Naive thymus-derived CD4-positive, alpha-beta T cell (primary cell): ENCODE measurements at regions of chrX and their contacts with region 1.

Region 1: GRCh38 chrX:19799319-19800182 is 87.8 kb downstream of the SH3KBP1 start:
- DNase-seq: peak in 7 of 9 donors; percentile 55 to 79 (median 72)
- ATAC-seq: peak; percentile 82
- H3K4me3 ChIP-seq: peak overlapping the region; percentile 86
- H3K4me3 Mint-ChIP-seq: peak overlapping the region; percentile 89 to 97 (median 94)
- H3K27ac ChIP-seq: peak overlapping the region; percentile 74
- H3K27ac Mint-ChIP-seq: peak overlapping the region; percentile 92 to 97 (median 95)
- H3K4me1 ChIP-seq: peaks cover 53 to 58% of the 10 kb centered on the region in 2 donors
- H3K4me1 Mint-ChIP-seq: peaks cover 15 to 74% (median 64%) of the 10 kb centered on the region in 7 donors
- H3K27me3 ChIP-seq: no peaks in the 10 kb centered on the region
- H3K27me3 Mint-ChIP-seq: no peaks in the 10 kb centered on the region

Region 2: GRCh38 chrX:19682712-19683331 is 116.7 kb before region 1 on chrX:
- CTCF ChIA-PET with region 1: no interaction called
- POLR2A ChIA-PET with region 1: interaction called, 3 read pairs
- intact Hi-C with region 1: loop called (anchors 2 to 5 kb)
- DNase-seq: peak; percentile 24 to 88 (median 81)
- ATAC-seq: peak; percentile 97
- H3K4me3 ChIP-seq: no peak overlapping the region
- H3K4me3 Mint-ChIP-seq: peak overlapping the region in 9 of 10 donors; percentile 4 to 85 (median 67)
- H3K27ac ChIP-seq: peak overlapping the region; percentile 81
- H3K27ac Mint-ChIP-seq: peak overlapping the region; percentile 85 to 100 (median 98)
- H3K4me1 ChIP-seq: peaks cover 30 to 37% of the 10 kb centered on the region in 2 donors
- H3K4me1 Mint-ChIP-seq: peaks cover 43 to 88% (median 82%) of the 10 kb centered on the region in 7 donors
- H3K27me3 ChIP-seq: no peaks in the 10 kb centered on the region
- H3K27me3 Mint-ChIP-seq: no peaks in the 10 kb centered on the region

Region 3: GRCh38 chrX:19772826-19773628 is 26.5 kb before region 1 on chrX:
- CTCF ChIA-PET with region 1: interaction called, 4 read pairs
- POLR2A ChIA-PET with region 1: interaction called, 3 read pairs
- intact Hi-C with region 1: loop called (anchors 2 kb)
- DNase-seq: no peak
- ATAC-seq: peak; percentile 36
- H3K4me3 ChIP-seq: no peak overlapping the region
- H3K4me3 Mint-ChIP-seq: peak overlapping the region; percentile 58 to 76 (median 66)
- H3K27ac ChIP-seq: peak overlapping the region; percentile 55
- H3K27ac Mint-ChIP-seq: peak overlapping the region; percentile 78 to 95 (median 88)
- H3K4me1 ChIP-seq: peaks cover 56 to 59% of the 10 kb centered on the region in 2 donors
- H3K4me1 Mint-ChIP-seq: peaks cover 26 to 85% (median 68%) of the 10 kb centered on the region in 7 donors
- H3K27me3 ChIP-seq: no peaks in the 10 kb centered on the region
- H3K27me3 Mint-ChIP-seq: no peaks in the 10 kb centered on the region

Region 4: DNA sequence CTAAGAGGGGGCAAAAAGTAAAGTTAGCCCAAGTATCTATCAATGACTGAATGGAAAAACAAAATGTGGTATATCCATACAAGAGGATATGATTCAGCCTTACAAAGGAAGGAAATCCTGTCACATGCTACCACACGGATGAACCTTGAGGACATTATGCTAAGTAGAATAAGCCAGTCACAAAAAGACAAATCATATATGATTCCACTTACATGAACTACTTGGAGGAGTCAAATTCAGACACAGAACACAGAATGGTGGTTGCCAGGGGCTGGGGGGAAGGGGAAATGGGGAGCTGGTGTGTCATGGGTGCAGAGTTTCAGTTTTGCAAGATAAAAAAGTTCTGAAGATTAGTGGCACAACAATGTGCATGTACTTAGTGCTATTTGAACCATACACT is 13.9 kb before region 1 on chrX:
- CTCF ChIA-PET with region 1: no interaction called
- POLR2A ChIA-PET with region 1: interaction called, 6 read pairs
- intact Hi-C with region 1: loop called in 1 of 2 experiments (anchors 2 kb)
- DNase-seq: no peak
- ATAC-seq: no peak
- H3K4me3 ChIP-seq: no peak overlapping the region
- H3K4me3 Mint-ChIP-seq: peak overlapping the region; percentile 6 to 64 (median 38)
- H3K27ac ChIP-seq: no peak overlapping the region
- H3K27ac Mint-ChIP-seq: peak overlapping the region in 5 of 9 donors; percentile 2 to 76 (median 67)
- H3K4me1 ChIP-seq: peaks cover 28 to 30% of the 10 kb centered on the region in 2 donors
- H3K4me1 Mint-ChIP-seq: peaks cover 27 to 87% (median 72%) of the 10 kb centered on the region in 7 donors
- H3K27me3 ChIP-seq: no peaks in the 10 kb centered on the region
- H3K27me3 Mint-ChIP-seq: no peaks in the 10 kb centered on the region

Region 5: DNA sequence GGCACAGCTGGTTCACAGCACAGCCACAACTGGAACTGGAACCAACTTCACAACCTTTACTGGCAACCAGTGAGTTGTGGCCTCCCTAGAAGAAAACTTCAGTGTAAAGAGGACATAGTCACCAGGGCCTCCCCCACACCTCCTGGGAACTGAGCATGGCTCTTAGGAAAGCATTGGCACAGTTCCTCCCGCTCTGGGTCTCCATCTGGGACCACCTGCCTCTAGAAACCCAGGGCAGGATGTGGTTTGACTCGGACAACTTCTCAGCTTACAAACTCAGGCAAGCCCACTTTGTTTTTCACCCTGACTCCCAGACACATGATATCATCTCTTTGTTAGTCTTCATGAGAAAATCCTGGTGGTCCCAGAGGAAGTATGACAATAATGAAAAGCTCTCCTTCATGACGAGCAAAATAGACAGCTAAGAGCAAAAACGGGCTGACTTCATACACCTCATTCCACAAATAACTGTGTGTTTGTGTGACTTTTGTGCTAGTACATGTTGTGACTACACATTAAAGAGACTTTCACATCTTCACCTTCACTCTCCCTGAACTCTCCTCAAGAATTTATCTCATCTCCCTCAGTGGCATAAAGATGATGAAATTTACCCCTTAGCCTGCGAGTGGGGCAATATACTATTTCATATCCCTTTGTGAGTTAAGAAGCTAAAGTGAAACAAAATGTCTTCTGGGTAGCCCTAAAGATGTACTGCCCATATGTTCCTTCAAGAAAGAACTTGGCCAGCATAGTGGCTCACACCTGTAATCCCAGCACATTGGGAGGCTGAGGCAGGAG is 12.5 kb after region 1 on chrX:
- CTCF ChIA-PET with region 1: interaction called, 3 read pairs
- POLR2A ChIA-PET with region 1: interaction called, 8 read pairs
- intact Hi-C with region 1: loop called in 1 of 2 experiments (anchors 1 kb)
- DNase-seq: no peak
- ATAC-seq: no peak
- H3K4me3 ChIP-seq: no peak overlapping the region
- H3K4me3 Mint-ChIP-seq: peak overlapping the region in 8 of 10 donors; percentile 7 to 57 (median 41)
- H3K27ac ChIP-seq: no peak overlapping the region
- H3K27ac Mint-ChIP-seq: peak overlapping the region; percentile 52 to 86 (median 77)
- H3K4me1 ChIP-seq: peaks cover 14 to 25% of the 10 kb centered on the region in 2 donors
- H3K4me1 Mint-ChIP-seq: peaks cover 32 to 79% (median 61%) of the 10 kb centered on the region in 7 donors
- H3K27me3 ChIP-seq: no peaks in the 10 kb centered on the region
- H3K27me3 Mint-ChIP-seq: no peaks in the 10 kb centered on the region

Region 6: GRCh38 chrX:19840899-19841648 is 41.5 kb after region 1 on chrX:
- CTCF ChIA-PET with region 1: interaction called, 4 read pairs
- POLR2A ChIA-PET with region 1: interaction called, 20 read pairs
- intact Hi-C with region 1: loop called (anchors 1 to 5 kb)
- DNase-seq: peak in 7 of 9 donors; percentile 12 to 48 (median 37)
- ATAC-seq: peak; percentile 87
- H3K4me3 ChIP-seq: peak overlapping the region; percentile 11
- H3K4me3 Mint-ChIP-seq: peak overlapping the region; percentile 22 to 87 (median 78)
- H3K27ac ChIP-seq: peak overlapping the region; percentile 32
- H3K27ac Mint-ChIP-seq: peak overlapping the region; percentile 73 to 94 (median 88)
- H3K4me1 ChIP-seq: peaks cover 7 to 22% of the 10 kb centered on the region in 2 donors
- H3K4me1 Mint-ChIP-seq: peaks cover 20 to 75% (median 65%) of the 10 kb centered on the region in 7 donors
- H3K27me3 ChIP-seq: no peaks in the 10 kb centered on the region
- H3K27me3 Mint-ChIP-seq: no peaks in the 10 kb centered on the region

Region 7: DNA sequence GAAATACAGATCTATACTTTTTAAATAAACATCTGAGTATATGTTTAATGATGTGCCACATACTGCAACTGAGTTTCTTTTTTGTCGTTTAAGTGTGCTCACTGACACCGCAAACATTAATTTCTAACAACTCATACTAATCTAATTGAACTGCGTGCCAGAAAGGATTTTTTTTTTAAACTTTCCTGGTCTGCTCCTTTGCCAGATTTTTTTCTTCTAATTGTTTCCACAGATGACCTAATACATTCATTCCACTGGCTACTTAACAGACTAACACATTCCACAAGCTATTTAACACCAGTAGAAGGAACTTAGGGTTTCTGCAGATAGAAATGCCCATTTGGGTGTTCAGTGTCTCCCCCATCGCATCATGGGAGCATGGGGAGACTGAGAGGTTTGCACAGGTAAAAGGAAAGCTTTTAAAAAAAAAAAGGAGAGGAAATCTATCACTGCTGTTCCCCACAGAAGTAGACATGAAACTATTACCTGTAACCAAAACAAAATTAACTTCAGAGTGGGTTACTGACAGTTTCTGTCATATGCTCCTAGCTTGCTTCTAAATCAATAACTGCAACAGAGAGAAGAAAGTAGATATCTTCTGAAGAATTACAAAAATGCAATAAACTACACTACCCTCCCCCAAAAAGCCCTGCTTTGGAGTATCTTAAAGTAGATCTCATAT is 56.3 kb after region 1 on chrX:
- CTCF ChIA-PET with region 1: interaction called, 7 read pairs
- POLR2A ChIA-PET with region 1: interaction called, 4 read pairs
- intact Hi-C with region 1: loop called in 1 of 2 experiments (anchors 2 kb)
- DNase-seq: no peak
- ATAC-seq: no peak
- H3K4me3 ChIP-seq: peak overlapping the region; percentile 13
- H3K4me3 Mint-ChIP-seq: peak overlapping the region in 9 of 10 donors; percentile 44 to 78 (median 74)
- H3K27ac ChIP-seq: peak overlapping the region; percentile 31
- H3K27ac Mint-ChIP-seq: peak overlapping the region; percentile 53 to 95 (median 85)
- H3K4me1 ChIP-seq: peaks cover 11 to 17% of the 10 kb centered on the region in 2 donors
- H3K4me1 Mint-ChIP-seq: peaks cover 24 to 45% (median 37%) of the 10 kb centered on the region in 7 donors
- H3K27me3 ChIP-seq: no peaks in the 10 kb centered on the region
- H3K27me3 Mint-ChIP-seq: no peaks in the 10 kb centered on the region